ENCODE measurements at regions of chr12 and their contacts with region 1.

Region 1: GRCh38 chr12:19643635-19644034 is 204.3 kb downstream of the AEBP2 start:
- DNase-seq: no peak

Region 2: GRCh38 chr12:19507823-19508222 is 135.8 kb before region 1 on chr12:
- intact Hi-C with region 1: loop called (anchors 10 kb)
- DNase-seq: no peak

Region 3: GRCh38 chr12:19719672-19720071 is 76.0 kb after region 1 on chr12:
- intact Hi-C with region 1: no loop called
- DNase-seq: no peak